Mucosa of descending colon (tissue), 3 donors: ENCODE measurements at regions of chr2 and their contacts with region 1.

Region 1: DNA sequence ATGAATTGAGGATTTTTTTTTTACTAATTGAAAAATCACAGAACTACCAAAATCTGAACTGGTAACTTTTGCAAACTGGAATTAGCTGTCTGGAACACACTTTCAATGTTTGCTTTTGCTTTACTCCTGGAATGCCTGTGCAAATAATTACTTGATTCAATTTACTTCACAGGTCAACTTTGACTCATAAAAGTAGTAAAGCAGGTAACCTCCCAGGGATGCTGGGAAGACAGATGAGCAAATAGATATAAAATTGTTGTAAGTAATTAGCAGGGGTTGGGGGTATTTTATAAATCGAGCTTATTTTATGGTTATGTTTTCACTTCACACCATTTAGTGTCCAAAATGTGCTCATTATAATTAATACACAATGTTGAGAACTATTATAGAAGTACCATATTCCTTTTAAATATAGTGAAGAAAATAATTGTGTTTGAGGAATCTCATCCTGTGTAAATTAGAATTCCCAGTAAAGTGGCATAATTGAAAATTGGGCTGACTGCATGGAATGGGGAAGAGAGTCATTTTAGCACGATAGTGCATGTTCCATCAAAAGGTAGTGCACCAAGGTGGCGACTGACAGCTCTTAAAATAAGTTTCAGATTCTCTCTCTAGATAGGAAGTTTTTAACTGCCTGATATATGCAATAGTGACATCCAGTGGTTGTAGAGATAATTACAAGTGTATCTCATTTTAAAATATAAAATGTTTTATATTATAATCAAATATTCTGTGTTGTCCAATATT is 398.1 kb upstream of the HNRNPA3 start:
- DNase-seq: no peak
- ATAC-seq: peak; percentile 65
- H3K4me3 ChIP-seq: no peak overlapping the region
- H3K4me1 ChIP-seq: no peaks in the 10 kb centered on the region
- CTCF ChIP-seq: peak; percentile 41

Region 2: DNA sequence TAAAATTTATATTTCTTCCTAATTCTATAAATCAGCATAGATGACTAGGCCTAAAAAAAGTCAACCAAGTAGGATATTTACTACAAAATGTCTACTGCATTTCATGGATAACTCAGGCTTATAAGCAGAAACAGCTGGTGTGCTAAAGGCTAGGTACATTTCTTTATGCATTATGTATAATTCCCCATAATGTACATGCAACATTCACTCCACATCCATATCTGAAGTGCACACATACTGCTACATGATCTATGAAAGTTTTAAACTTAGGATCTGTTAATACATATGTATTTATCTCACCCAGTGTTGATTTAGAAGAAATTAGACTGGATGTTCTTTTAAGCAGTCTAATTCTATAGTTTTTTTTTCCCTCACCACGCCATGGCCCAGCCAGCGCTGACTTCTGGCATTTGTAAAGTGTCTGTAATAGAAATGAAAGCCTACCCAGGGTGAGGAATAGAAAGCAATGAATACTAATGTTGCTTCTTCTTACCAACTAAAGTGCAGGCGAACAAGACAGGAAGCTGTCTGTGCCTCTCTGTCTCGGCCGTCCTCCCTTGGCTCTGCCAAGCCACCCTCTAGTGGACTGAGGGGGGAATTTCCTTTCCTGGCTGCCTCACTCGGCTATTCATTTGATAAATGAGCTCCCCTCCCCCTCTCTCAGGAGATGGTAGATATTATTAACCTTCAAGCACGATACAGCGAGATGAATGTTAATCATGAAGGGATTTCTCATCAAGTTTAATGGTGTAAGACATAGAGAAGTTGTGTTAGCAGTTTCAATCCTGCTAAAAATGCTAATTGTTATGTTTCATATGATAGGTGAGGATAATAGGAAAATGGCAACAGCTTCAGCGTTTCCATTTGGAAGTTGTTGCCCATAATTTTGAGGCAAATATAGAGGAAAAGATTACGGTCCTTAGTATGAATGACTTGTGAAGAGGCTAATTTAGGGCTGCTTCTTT is 160.7 kb before region 1 on chr2:
- intact Hi-C with region 1: loop called in 1 of 2 experiments (anchors 10 kb)
- DNase-seq: peak; percentile 50 to 69 (median 57)
- ATAC-seq: peak; percentile 91
- H3K4me3 ChIP-seq: no peak overlapping the region
- H3K4me1 ChIP-seq: no peaks in the 10 kb centered on the region
- CTCF ChIP-seq: peak; percentile 35